CD8-positive, alpha-beta T cell (primary cell): ENCODE measurements at regions of chr2 and their contacts with region 1.

Region 1: DNA sequence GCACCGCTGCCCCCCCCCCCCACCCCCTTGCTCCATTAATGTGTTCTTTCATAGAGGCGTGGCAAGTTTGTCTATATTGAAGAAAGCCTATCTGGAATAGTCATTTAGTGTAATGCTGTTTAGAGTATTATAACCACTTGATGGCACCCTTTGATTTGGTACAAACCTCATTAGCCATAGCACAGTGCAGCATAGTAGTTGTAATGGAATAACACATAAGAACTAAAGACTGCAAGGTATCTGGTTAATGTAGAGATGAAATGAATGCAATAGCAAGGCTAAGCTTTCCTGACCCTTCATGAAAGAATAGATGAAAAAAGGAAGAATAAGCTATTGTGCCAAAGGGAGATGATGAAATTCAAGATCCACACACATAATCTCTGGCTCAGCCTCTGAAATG is 81.9 kb downstream of the EHBP1 start:
- DNase-seq: peak in 2 of 9 experiments; percentile 15 to 17
- ATAC-seq: no peak
- H3K4me3 ChIP-seq: no peak overlapping the region
- H3K4me3 Mint-ChIP-seq: no peak overlapping the region
- H3K27ac ChIP-seq: no peak overlapping the region
- H3K27ac Mint-ChIP-seq: no peak overlapping the region
- H3K4me1 ChIP-seq: no peaks in the 10 kb centered on the region
- H3K4me1 Mint-ChIP-seq: peaks cover 4% of the 10 kb centered on the region
- H3K27me3 ChIP-seq: no peaks in the 10 kb centered on the region
- H3K27me3 Mint-ChIP-seq: no peaks in the 10 kb centered on the region
- CTCF ChIP-seq: no peak

Region 2: GRCh38 chr2:62774555-62775366 is 12.6 kb before region 1 on chr2:
- CTCF ChIA-PET with region 1: interaction called, 15 read pairs
- POLR2A ChIA-PET with region 1: no interaction called
- intact Hi-C with region 1: no loop called
- DNase-seq: peak in 3 of 9 experiments; percentile 7 to 56 (median 48)
- ATAC-seq: no peak
- H3K4me3 ChIP-seq: no peak overlapping the region
- H3K4me3 Mint-ChIP-seq: no peak overlapping the region
- H3K27ac ChIP-seq: no peak overlapping the region
- H3K27ac Mint-ChIP-seq: no peak overlapping the region
- H3K4me1 ChIP-seq: no peaks in the 10 kb centered on the region
- H3K4me1 Mint-ChIP-seq: no peaks in the 10 kb centered on the region
- H3K27me3 ChIP-seq: no peaks in the 10 kb centered on the region
- H3K27me3 Mint-ChIP-seq: no peaks in the 10 kb centered on the region
- CTCF ChIP-seq: peak; percentile 90

Region 3: DNA sequence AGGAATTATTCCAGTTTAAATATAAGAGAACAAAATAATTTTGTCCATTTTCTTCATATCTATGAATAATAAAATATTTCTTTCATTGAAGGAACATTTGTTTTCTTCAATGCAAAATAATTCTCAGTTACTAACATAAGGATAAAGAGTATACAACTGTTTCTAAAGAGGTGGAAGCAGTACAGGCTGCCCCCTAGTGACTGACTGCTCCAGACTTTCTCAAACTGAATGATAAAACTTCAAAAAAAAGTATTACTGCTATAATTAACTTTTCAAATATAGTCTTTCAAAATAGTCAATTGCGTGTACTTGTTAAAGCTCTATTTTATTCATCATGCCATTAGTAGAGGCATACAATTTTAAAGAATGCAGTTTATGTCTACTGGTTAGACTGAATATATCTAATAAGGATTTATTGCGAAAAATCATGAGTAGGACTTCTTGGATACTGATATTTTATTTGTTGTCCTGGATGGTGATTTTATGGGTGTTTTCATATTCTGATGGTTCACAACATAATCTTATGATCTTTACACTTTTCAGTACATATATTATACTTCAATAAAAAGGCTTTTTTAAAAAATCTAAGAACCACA is 700.8 kb after region 1 on chr2:
- CTCF ChIA-PET with region 1: no interaction called
- POLR2A ChIA-PET with region 1: no interaction called
- intact Hi-C with region 1: loop called in 1 of 2 experiments (anchors 5 kb)
- DNase-seq: peak in 2 of 9 experiments; percentile 9 to 13
- ATAC-seq: no peak
- H3K4me3 ChIP-seq: no peak overlapping the region
- H3K4me3 Mint-ChIP-seq: no peak overlapping the region
- H3K27ac ChIP-seq: no peak overlapping the region
- H3K27ac Mint-ChIP-seq: no peak overlapping the region
- H3K4me1 ChIP-seq: no peaks in the 10 kb centered on the region
- H3K4me1 Mint-ChIP-seq: peaks cover 2% of the 10 kb centered on the region
- H3K27me3 ChIP-seq: no peaks in the 10 kb centered on the region
- H3K27me3 Mint-ChIP-seq: no peaks in the 10 kb centered on the region
- CTCF ChIP-seq: peak; percentile 32

Region 4: GRCh38 chr2:63544017-63544627 is 756.7 kb after region 1 on chr2:
- CTCF ChIA-PET with region 1: no interaction called
- POLR2A ChIA-PET with region 1: interaction called, 4 read pairs
- intact Hi-C with region 1: loop called in 1 of 2 experiments (anchors 10 kb)
- DNase-seq: peak in 2 of 9 experiments; percentile 3 to 22
- ATAC-seq: no peak
- H3K4me3 ChIP-seq: no peak overlapping the region
- H3K4me3 Mint-ChIP-seq: no peak overlapping the region
- H3K27ac ChIP-seq: no peak overlapping the region
- H3K27ac Mint-ChIP-seq: no peak overlapping the region
- H3K4me1 ChIP-seq: no peaks in the 10 kb centered on the region
- H3K4me1 Mint-ChIP-seq: no peaks in the 10 kb centered on the region
- H3K27me3 ChIP-seq: no peaks in the 10 kb centered on the region
- H3K27me3 Mint-ChIP-seq: no peaks in the 10 kb centered on the region
- CTCF ChIP-seq: peak; percentile 47

Region 5: GRCh38 chr2:63888490-63889402 is 1101.4 kb after region 1 on chr2:
- CTCF ChIA-PET with region 1: no interaction called
- POLR2A ChIA-PET with region 1: no interaction called
- intact Hi-C with region 1: loop called in 1 of 2 experiments (anchors 5 kb)
- DNase-seq: peak in 7 of 9 experiments; percentile 3 to 63 (median 35)
- ATAC-seq: peak; percentile 77
- H3K4me3 ChIP-seq: no peak overlapping the region
- H3K4me3 Mint-ChIP-seq: no peak overlapping the region
- H3K27ac ChIP-seq: no peak overlapping the region
- H3K27ac Mint-ChIP-seq: peak overlapping the region; percentile 30
- H3K4me1 ChIP-seq: no peaks in the 10 kb centered on the region
- H3K4me1 Mint-ChIP-seq: peaks cover 4% of the 10 kb centered on the region
- H3K27me3 ChIP-seq: no peaks in the 10 kb centered on the region
- H3K27me3 Mint-ChIP-seq: no peaks in the 10 kb centered on the region
- CTCF ChIP-seq: peak; percentile 71